ENCODE measurements at regions of chr17 and their contacts with region 1.

Region 1: GRCh38 chr17:19753049-19753444 is 4.9 kb upstream of the ALDH3A1 start:
- DNase-seq: peak; percentile 96
- H3K4me3 ChIP-seq: no peak overlapping the region
- H3K27ac ChIP-seq: peak overlapping the region; percentile 96
- H3K4me1 ChIP-seq: peaks cover 54% of the 10 kb centered on the region
- H3K27me3 ChIP-seq: no peaks in the 10 kb centered on the region
- CTCF ChIP-seq: peak in 1 of 2 donors; percentile 1

Region 2: GRCh38 chr17:19579867-19580565 is 173.0 kb before region 1 on chr17:
- CTCF ChIA-PET with region 1: no interaction called
- dilution Hi-C with region 1: no loop called
- in situ Hi-C with region 1: no loop called
- intact Hi-C with region 1: loop called (anchors 5 kb)
- DNase-seq: no peak
- H3K4me3 ChIP-seq: peak overlapping the region in 2 of 3 experiments; percentile 7 to 34
- H3K27ac ChIP-seq: no peak overlapping the region
- H3K4me1 ChIP-seq: peaks cover 5% of the 10 kb centered on the region
- H3K27me3 ChIP-seq: peaks cover 12% of the 10 kb centered on the region
- CTCF ChIP-seq: no peak

Region 3: GRCh38 chr17:19648475-19649406 is 104.3 kb before region 1 on chr17 and contains the start of gene ALDH3A2:
- CTCF ChIA-PET with region 1: no interaction called
- dilution Hi-C with region 1: loop called (anchors 5 kb)
- in situ Hi-C with region 1: loop called in 1 of 2 experiments (anchors 10 kb)
- intact Hi-C with region 1: loop called (anchors 1 kb)
- DNase-seq: peak; percentile 91
- H3K4me3 ChIP-seq: peak within 1 kb of the TSS; percentile 78 to 94 (median 84)
- H3K27ac ChIP-seq: peak within 1 kb of the TSS; percentile 72
- H3K4me1 ChIP-seq: peaks cover 40% of the 10 kb centered on the region
- H3K27me3 ChIP-seq: no peaks in the 10 kb centered on the region
- CTCF ChIP-seq: no peak
- total RNA-seq, gene ALDH3A2: 59.5 to 212 TPM

Region 4: GRCh38 chr17:19718604-19719354 is 34.3 kb before region 1 on chr17:
- CTCF ChIA-PET with region 1: interaction called, 8 read pairs
- dilution Hi-C with region 1: no loop called
- in situ Hi-C with region 1: loop called in 1 of 2 experiments (anchors 5 kb)
- intact Hi-C with region 1: loop called (anchors 1 kb)
- DNase-seq: peak; percentile 23
- H3K4me3 ChIP-seq: no peak overlapping the region
- H3K27ac ChIP-seq: peak overlapping the region; percentile 45
- H3K4me1 ChIP-seq: peaks cover 50% of the 10 kb centered on the region
- H3K27me3 ChIP-seq: no peaks in the 10 kb centered on the region
- CTCF ChIP-seq: peak; percentile 49 to 75

Region 5: DNA sequence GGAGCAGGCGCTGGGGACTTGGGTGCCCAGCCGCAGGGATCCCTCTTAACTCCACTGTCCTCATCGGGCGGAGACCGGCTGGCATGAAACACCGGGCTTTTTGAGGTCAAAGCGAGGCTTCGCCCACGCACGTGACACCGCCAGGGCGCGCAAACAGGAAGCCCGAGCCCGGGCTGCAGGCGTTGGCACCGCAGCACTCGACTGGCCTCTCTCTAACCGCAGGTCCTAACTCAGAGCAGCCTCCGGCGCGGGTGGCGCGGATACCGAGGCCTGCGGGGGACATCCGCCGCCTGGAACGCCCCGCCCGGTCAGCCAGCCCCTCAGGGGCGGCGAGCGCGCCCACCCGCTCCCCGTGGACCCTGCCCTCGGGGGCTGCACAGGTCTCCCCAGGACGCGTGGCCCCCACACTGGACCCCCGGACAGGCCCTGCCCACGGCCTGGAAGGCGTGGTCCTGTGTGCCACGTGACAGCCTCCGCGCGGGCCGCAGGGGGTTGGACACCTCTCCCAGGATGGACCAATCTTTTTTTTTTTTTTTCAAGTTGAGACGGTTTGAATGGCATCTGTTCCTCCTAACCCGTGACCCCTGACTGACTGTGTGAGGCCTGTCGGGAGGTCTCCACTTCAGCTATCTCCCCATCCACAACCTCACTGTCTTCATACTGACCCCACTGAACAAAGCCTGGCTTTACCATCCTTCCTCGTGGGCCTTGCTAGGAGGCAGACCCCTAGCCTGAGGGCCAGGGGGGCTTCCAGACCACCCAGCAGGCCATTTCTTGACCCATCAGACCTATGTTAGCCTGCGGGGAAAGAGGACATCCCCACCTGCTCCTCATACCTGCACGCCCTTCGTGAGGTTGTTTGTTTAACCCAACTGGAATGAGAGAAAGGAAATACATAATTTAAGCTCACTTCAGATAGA is 28.3 kb before region 1 on chr17:
- CTCF ChIA-PET with region 1: interaction called, 4 read pairs
- dilution Hi-C with region 1: no loop called
- in situ Hi-C with region 1: loop called in 1 of 2 experiments (anchors 5 kb)
- intact Hi-C with region 1: loop called (anchors 1 kb)
- DNase-seq: peak; percentile 75
- H3K4me3 ChIP-seq: no peak overlapping the region
- H3K27ac ChIP-seq: peak overlapping the region; percentile 72
- H3K4me1 ChIP-seq: peaks cover 53% of the 10 kb centered on the region
- H3K27me3 ChIP-seq: no peaks in the 10 kb centered on the region
- CTCF ChIP-seq: no peak

Region 6: DNA sequence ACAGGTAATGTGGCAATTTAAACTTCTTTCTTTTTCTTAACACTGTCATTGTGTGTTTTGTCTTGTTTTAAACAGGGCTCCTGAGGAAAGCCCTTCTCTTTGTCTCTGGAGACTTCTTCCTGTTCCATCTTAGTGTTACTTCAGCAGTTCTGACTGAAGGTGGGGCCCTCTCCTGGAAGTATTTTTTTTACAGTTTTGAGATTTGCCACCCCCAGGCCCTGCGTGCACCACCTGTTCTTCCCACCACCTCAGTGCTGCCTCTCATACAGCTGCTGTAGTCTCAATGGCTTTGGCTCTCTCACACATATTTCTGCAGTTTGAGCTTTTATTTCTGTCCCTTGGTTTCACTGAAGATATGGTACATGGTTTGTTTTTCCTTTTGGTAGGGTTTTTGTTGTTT is 47.5 kb after region 1 on chr17:
- CTCF ChIA-PET with region 1: no interaction called
- dilution Hi-C with region 1: no loop called
- in situ Hi-C with region 1: no loop called
- intact Hi-C with region 1: no loop called
- DNase-seq: no peak
- H3K4me3 ChIP-seq: no peak overlapping the region
- H3K27ac ChIP-seq: peak overlapping the region; percentile 27
- H3K4me1 ChIP-seq: peaks cover 16% of the 10 kb centered on the region
- H3K27me3 ChIP-seq: no peaks in the 10 kb centered on the region
- CTCF ChIP-seq: no peak